ENCODE measurements at regions of chr1 and their contacts with region 1.

Region 1: DNA sequence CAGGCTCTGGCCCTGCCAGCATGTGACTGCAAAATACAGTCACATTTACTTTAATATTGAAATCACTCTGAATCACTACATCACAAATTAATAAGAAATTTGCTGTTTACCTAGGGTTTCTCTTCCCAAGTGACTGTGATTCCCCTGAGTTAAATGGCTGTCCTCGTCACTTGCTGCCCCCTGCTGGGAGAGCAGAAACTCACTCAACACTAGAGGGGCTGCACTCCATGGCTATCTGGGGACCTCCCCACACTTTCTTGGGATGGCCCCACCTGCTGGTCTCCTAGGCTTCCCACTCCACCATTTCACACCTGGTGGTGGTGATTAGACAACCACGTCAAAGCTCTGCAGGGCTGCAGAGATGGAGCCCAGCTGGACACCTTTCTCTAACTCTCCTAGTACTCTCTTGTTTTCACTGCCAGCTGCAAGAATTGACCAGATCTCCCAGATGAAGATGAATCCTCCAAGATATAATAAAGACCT is 63.4 kb downstream of the CD2 start:
- DNase-seq: peak; percentile 63
- CTCF ChIP-seq: peak; percentile 85

Region 2: DNA sequence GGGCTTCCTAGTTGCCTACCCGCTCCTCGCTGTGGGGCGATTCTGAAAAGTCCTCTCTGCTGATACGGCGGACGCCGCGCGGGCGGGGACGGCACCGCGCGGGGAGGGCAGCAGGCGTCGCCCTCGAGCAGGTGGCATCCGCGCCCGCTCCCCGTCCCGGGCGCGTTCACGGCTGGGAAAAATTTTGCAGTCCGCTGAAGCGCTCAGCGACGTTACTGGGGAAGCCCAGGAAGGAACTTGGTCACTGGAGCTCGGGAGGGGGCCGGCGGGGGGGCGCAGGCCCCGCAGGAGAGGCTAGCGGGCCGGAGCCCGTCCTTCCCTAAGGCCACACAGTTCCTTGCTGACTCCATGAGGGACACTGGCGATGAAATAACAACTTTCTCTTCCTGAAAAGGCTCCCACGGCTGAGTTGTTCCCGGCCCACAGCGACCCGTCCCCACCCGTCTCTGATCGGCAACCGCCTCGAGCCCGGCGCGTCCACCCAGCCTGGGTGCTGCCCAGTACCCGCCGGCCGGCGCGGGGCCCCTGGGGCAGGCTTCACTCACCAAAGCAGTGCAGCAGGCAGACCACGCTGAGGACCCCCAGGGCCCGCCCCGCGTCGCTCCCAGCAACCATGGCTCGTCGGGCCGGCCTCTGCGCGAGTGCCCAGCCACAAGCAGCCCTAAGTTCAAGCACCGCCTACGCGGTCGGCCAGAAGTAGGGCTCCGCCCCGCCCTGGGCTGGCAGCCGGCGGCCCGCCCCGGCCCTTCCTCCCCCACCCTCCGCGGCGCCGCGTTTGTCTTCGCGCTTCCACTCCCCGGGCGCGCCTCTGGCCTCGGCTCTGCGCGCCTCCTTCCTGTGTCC is 247.0 kb before region 1 on chr1 and contains the start of gene CD58:
- in situ Hi-C with region 1: loop called (anchors 25 kb)
- DNase-seq: peak; percentile 92
- CTCF ChIP-seq: peak; percentile 82

Region 3: GRCh38 chr1:117161898-117162297 is 344.3 kb after region 1 on chr1:
- in situ Hi-C with region 1: no loop called
- DNase-seq: no peak
- CTCF ChIP-seq: no peak

Measured in GM13977 (cell line).